GM23248 (cell line): ENCODE measurements at regions of chr15 and their contacts with region 1.

Region 1: DNA sequence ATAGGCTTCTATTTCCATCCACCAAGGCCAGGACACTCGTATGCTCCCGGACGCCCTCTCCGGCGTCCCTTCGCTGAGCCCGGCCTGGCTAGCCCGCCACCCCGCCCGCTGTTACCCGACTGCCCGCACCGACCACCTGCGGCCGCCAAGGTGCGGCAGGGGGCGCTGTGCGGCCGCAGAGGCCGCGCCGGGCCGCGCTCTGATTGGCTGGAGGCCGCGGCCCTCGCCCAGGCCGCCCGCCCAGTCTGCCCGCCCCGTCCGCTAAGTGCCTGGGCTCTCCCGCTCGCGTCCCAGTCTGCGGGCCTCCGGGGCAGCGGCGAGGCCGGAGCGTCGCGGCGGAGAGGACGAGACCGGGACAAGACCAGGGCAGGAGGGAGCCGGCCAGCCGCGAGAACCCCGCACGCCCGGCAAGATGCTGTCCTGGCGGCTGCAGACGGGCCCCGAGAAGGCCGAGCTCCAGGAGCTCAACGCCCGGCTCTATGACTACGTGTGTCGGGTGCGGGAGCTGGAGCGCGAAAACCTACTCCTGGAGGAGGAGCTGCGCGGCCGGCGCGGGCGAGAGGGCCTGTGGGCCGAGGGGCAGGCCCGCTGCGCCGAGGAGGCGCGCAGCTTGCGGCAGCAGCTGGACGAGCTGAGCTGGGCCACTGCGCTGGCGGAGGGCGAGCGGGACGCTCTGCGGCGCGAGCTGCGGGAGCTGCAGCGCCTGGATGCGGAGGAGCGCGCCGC is at the start of gene SYNM:
- DNase-seq: peak; percentile 81
- H3K4me3 ChIP-seq: peak within 1 kb of the TSS; percentile 56
- H3K27ac ChIP-seq: no peak within 1 kb of the TSS
- H3K4me1 ChIP-seq: 0 out of 2 replicates have a peak, but pooled peaks cover 4% of the 10 kb centered on the region
- H3K27me3 ChIP-seq: peaks cover 11% of the 10 kb centered on the region; the same call in 1 of the 2 replicates
- total RNA-seq, gene SYNM: 0.97 and 1.6 TPM in 2 replicates

Region 2: GRCh38 chr15:99213187-99213811 is 108.3 kb after region 1 on chr15:
- in situ Hi-C with region 1: loop called (anchors 5 kb)
- DNase-seq: peak; percentile 85
- H3K4me3 ChIP-seq: no peak overlapping the region
- H3K27ac ChIP-seq: no peak overlapping the region
- H3K4me1 ChIP-seq: no peaks in the 10 kb centered on the region
- H3K27me3 ChIP-seq: no peaks in the 10 kb centered on the region

Region 3: GRCh38 chr15:99275525-99276128 is 170.7 kb after region 1 on chr15:
- in situ Hi-C with region 1: no loop called
- DNase-seq: no peak
- H3K4me3 ChIP-seq: no peak overlapping the region
- H3K27ac ChIP-seq: no peak overlapping the region
- H3K4me1 ChIP-seq: no peaks in the 10 kb centered on the region
- H3K27me3 ChIP-seq: no peaks in the 10 kb centered on the region